ENCODE measurements at regions of chr5 and their contacts with region 1.

Region 1: DNA sequence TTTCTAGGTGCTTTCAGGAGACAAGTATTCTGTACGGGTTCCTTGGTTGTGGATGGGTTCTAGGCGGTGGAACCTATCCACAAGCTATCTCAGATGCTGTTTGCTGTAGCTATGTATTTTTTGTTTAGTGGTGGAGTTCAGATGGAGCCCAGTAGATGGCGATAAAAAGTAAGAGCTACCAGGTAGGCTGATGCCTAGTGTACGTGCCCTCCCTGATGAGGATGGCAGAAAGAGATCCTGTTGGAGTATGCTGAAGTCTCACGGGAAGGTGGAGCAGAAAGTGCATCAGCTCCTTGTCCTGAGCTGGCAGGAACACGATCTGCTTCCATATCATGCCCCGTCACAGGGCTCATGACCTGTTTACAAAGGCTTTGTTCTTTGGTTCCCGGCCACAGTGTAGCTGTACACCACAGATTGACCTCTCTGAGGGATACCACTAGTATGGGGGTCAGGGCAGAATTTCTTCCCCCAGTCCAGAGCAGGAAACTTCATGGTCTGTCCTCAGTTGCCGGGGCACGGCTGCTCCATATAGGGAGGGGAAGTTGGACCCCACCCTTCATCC is 12.6 kb upstream of the UGT3A2 start:
- H3K4me3 ChIP-seq: no peak overlapping the region
- H3K27ac ChIP-seq: no peak overlapping the region
- H3K4me1 ChIP-seq: no peaks in the 10 kb centered on the region; the same call in 1 of the 2 replicates
- CTCF ChIP-seq: peak; percentile 66; the same call in 1 of the 2 replicates

Region 2: GRCh38 chr5:35753490-35753889 is 325.8 kb before region 1 on chr5:
- CTCF ChIA-PET with region 1: no interaction called
- POLR2A ChIA-PET with region 1: no interaction called
- H3K4me3 ChIP-seq: no peak overlapping the region
- H3K27ac ChIP-seq: no peak overlapping the region
- H3K4me1 ChIP-seq: no peaks in the 10 kb centered on the region
- CTCF ChIP-seq: no peak

Region 3: GRCh38 chr5:36066540-36067210 is 12.6 kb before region 1 on chr5 and contains the start of gene UGT3A2:
- CTCF ChIA-PET with region 1: interaction called, 30 read pairs
- POLR2A ChIA-PET with region 1: no interaction called
- H3K4me3 ChIP-seq: peak within 1 kb of the TSS; percentile 47
- H3K27ac ChIP-seq: no peak within 1 kb of the TSS
- H3K4me1 ChIP-seq: no peaks in the 10 kb centered on the region
- CTCF ChIP-seq: peak; percentile 32; the same call in 1 of the 2 replicates

Region 4: DNA sequence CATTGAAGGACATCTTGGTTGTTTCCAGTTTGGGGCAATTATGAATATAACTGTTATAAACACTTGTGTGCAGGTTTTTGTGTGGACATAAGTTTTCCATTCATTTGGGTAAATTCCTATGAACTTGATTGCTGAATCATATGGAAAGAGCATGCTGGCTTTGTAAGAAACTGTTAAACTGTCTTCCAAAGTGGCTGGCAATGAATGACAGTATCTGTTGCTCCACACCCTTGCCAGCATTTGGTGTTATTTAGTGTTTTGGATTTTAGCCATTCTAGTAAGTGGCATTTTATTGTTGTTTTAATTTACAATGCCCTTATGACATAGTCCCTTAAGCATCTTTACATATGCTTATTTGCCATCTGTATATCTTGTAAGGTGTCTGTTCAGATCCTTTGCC is 17.2 kb after region 1 on chr5:
- CTCF ChIA-PET with region 1: interaction called, 29 read pairs
- POLR2A ChIA-PET with region 1: no interaction called
- H3K4me3 ChIP-seq: no peak overlapping the region
- H3K27ac ChIP-seq: no peak overlapping the region
- H3K4me1 ChIP-seq: no peaks in the 10 kb centered on the region
- CTCF ChIP-seq: no peak

Region 5: GRCh38 chr5:36172599-36173324 is 93.5 kb after region 1 on chr5:
- CTCF ChIA-PET with region 1: interaction called, 15 read pairs
- POLR2A ChIA-PET with region 1: no interaction called
- H3K4me3 ChIP-seq: no peak overlapping the region
- H3K27ac ChIP-seq: no peak overlapping the region
- H3K4me1 ChIP-seq: no peaks in the 10 kb centered on the region
- CTCF ChIP-seq: no peak

Region 6: DNA sequence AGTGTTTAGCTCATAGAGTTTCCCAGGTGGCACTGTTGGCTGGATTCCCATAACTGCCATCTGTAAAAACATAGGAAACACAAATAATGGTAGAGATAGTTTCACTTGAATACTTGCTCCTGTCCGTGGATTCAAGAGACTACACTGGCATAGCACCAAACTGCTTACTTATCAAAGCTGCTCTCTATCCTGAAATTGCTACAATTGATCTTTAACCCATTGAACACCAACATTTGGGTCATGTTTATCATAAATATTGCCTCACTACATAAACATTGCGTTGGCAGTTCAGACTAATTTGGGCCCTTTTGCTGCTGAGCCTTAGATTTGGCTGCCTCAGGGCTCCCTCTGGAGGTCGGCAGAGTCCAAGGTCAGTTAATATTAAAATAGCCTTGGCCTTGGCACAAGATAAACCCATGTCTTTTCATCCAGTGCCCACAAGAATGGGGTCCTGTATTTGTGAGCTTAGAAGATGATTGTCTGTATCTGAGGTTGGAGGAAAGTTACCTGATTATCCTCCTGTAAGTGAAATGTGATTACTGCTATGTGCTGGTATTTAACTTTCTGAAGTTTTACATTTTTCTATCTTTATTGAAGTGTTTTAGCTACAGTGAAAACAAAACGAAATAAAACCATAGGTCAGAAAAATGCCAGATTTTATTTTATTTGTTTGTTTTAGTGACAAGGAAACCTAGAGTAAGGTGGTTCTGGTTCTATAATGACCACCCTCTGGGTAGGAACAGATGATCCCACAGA is 226.5 kb after region 1 on chr5:
- CTCF ChIA-PET with region 1: interaction called, 28 read pairs
- POLR2A ChIA-PET with region 1: no interaction called
- H3K4me3 ChIP-seq: no peak overlapping the region
- H3K27ac ChIP-seq: no peak overlapping the region
- H3K4me1 ChIP-seq: peaks cover 19% of the 10 kb centered on the region
- CTCF ChIP-seq: peak; percentile 87

Measured in HEK293 (cell line).